Sigmoid colon (tissue), 7 donors: ENCODE measurements at regions of chr1 and their contacts with region 1.

Region 1: DNA sequence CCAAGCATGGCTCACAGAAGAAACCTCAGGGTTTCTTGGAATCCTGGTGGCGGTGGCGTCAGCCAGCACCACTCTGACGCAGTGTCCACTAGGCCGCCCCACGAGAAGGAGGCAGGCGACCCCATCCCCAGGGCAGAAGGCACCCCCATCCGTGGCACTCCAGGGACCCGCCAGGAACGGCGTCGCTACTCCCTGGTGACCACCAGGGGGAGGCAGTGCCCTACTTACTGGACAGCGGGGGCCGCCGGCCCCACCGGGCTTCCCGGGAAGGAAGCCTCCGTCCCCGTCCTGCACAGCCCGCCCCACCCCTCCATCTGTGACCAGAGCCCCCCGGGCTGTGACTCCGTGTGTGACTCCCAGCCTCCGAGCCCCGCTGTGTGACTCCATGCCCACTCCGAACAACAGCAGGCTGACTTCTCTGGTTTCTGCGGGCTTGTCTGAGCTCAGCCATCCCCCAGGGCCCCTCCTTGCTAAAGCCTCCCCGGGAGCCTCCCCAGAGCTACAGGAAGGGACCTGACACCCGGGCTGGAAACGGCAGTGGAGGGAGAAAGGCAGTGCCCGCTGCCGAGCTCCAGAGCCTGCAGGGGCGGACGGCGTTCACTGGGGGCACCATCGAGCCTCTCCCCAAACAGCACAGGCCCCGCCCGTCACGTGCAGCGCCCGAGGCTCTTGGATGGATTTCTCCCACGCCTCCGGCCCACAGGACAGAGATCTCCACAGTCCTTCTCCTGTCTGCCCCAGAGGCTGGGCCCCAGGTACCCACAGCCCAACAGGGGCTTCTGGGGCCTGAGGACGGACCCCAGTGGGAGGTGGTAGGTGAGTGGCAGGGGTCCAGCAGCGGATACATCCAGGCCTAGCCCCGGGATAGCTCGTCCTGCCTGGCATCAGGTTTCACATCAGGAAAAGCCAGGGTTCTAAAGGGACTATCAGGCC is 21.1 kb downstream of the KIF17 start:
- DNase-seq: peak; percentile 96
- H3K4me3 ChIP-seq: peak overlapping the region; percentile 28 to 62 (median 56)
- H3K27ac ChIP-seq: peak overlapping the region; percentile 80 to 92 (median 88)
- H3K4me1 ChIP-seq: peaks cover 0 to 33% (median 27%) of the 10 kb centered on the region in 4 donors
- H3K27me3 ChIP-seq: no peaks in the 10 kb centered on the region
- CTCF ChIP-seq: peak; percentile 83 to 98 (median 94)
- EP300 ChIP-seq: no peak
- POLR2A ChIP-seq: no peak

Region 2: DNA sequence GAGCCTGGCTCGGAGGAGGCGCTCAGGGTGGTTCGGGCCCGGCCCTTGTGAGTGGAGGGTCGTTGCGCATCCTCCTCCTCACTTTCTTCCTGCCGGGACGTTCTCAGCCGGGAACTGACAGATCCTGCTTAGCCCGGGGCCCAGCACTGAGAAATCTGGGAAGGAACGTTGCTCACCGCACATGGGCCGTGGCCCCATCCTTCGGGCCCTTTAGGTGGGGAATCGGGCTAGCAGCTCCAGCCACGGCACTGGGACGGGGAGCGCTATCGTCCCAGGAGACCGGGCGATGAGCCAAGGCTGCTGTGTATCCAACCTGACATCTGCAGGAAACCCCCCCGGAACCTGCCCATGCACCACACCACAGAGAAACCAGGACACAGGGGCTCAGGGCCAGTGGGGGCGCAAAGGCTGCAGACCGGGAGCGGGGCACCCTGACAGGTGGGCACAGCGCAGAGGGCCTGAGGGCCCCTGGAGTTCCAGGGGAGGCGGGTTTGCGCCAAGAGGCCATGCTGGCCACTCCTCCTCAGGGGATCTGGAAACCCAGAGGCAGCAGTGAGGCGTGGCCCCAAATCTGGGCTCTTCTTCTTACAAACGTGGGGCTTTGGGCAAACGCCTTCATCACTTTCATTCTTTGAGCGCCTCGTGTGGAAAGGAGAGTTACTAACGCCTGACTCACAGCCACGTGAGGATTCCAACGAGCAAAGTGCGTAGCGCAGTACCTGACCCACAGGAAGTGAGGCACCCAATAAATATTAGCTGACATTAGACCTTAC is 36.1 kb after region 1 on chr1 and contains the start of gene SH2D5:
- intact Hi-C with region 1: loop called (anchors 1 kb)
- DNase-seq: peak; percentile 93
- H3K4me3 ChIP-seq: peak within 1 kb of the TSS; percentile 34 to 58 (median 56)
- H3K27ac ChIP-seq: peak within 1 kb of the TSS; percentile 44 to 80 (median 62)
- H3K4me1 ChIP-seq: peaks cover 0 to 25% (median 23%) of the 10 kb centered on the region in 4 donors
- H3K27me3 ChIP-seq: peaks cover 8 to 27% (median 10%) of the 10 kb centered on the region in 3 donors
- CTCF ChIP-seq: peak in 1 of 4 experiments; percentile 21
- EP300 ChIP-seq: peak in 1 of 4 donors; percentile 65
- POLR2A ChIP-seq: no peak
- total RNA-seq, gene SH2D5: 0.14 to 0.55 (median 0.36) TPM in 3 of 4 donors, not detected in the other

Region 3: DNA sequence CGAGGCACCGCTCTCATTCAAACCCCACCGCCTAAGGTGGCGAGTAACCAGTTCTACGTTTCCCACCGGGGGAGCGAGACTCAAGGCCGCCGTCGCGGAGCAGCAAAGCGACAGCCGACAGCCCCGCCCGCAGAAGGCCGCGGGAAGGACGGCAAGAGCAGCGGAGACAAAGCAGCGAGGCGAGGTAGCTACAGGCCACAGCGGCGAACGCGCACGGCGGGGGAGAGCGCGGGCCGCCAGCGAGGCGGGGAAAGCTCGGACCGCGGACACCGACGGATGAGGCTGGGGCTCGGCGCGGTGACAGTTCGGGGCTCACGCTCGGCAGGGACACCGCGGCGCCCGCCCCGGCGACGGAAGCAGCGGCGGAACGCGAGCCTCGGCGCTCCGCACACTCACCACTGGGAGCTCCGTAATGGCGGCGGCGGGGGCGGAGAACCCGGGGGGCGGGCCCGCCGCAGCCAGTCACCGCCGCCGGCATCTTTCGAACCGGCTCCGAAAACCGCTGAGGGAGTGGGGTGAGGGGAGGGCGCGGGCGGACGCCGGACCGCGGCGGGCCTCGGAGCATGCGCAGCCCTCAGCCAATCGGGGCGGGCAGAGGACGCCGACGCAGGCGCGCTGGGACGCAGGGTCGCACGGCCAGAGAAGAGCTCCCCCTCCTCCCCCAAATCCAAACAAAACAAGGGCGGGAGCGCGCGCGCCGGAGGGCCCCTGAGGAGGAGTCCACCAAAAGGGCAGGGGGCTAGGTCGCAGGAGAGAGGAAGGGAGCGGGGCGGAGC is 89.8 kb after region 1 on chr1:
- intact Hi-C with region 1: loop called (anchors 5 kb)
- DNase-seq: peak; percentile 97
- H3K4me3 ChIP-seq: peak overlapping the region; percentile 81 to 98 (median 93)
- H3K27ac ChIP-seq: peak overlapping the region; percentile 96 to 100 (median 99)
- H3K4me1 ChIP-seq: peaks cover 0 to 51% (median 34%) of the 10 kb centered on the region in 4 donors
- H3K27me3 ChIP-seq: no peaks in the 10 kb centered on the region
- CTCF ChIP-seq: no peak
- EP300 ChIP-seq: no peak
- POLR2A ChIP-seq: peak; percentile 62 to 67

Region 4: DNA sequence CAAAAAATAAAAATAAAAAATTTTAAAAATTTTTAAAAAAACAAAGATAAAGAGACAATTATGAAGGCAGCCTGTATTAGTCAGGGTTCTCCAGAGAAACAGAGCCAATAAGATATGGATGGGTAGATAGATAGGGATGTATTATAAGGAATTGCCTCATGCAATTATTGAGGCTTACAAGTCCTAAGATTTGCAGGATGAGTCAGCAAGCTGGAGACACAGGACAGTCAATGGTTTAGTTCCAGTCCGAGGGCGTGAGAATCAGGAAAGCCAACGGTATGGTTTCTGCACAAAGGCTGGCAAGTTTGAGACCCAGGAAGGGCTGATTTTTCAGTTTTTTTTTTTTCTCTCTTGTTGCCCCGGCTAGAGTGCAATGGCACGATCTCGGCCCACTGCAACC is 504.1 kb after region 1 on chr1:
- intact Hi-C with region 1: loop called (anchors 1 kb)
- DNase-seq: no peak
- H3K4me3 ChIP-seq: no peak overlapping the region
- H3K27ac ChIP-seq: no peak overlapping the region
- H3K4me1 ChIP-seq: no peaks in the 10 kb centered on the region
- H3K27me3 ChIP-seq: no peaks in the 10 kb centered on the region
- CTCF ChIP-seq: no peak
- EP300 ChIP-seq: no peak
- POLR2A ChIP-seq: no peak